IMR-90 (cell line): ENCODE measurements at regions of chr10 and their contacts with region 1.

Region 1: DNA sequence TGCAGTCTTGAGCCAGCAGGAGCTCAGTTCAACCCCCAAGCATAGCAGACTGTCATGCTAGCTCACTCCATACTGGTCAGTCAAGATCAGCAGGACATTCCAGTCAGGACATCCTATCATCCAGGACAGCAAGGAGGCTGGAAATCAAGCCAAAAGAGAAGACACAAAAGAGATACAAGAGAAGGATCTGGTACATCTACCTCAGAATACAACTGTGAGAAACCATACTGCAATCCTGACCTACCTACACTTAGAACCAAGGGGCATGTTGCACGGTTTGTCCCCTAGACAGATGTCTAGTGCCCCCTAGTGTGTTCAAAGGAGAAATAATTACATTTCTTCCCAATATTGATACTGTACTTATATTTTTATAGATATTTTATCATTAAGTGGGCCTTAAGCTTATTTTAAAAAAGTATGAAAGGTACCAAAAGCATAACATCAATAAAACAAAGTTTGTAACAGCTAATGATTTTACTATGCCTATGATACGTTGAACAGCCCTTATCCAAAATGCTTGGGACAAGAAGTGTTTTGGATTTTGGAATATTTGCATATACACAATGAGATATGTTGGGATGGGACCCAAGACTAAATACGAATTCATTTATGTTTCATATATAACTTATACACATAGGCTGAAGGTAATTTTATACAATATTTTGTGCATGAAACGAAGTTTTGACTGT is 26.7 kb downstream of the ERCC6 start:
- DNase-seq: peak; percentile 43
- ATAC-seq: peak; percentile 81
- H3K4me3 ChIP-seq: no peak overlapping the region
- H3K27ac ChIP-seq: no peak overlapping the region
- H3K4me1 ChIP-seq: peaks cover 2% of the 10 kb centered on the region; the same call in 1 of the 2 replicates
- H3K27me3 ChIP-seq: no peaks in the 10 kb centered on the region
- CTCF ChIP-seq: peak; percentile 70
- POLR2A ChIP-seq: no peak
- RAD21 ChIP-seq: peak; percentile 82

Region 2: GRCh38 chr10:48976196-48976595 is 536.1 kb before region 1 on chr10:
- CTCF ChIA-PET with region 1: interaction called, 4 read pairs
- POLR2A ChIA-PET with region 1: no interaction called
- dilution Hi-C with region 1: no loop called
- in situ Hi-C with region 1: loop called (anchors 5 kb)
- intact Hi-C with region 1: loop called (anchors 1 kb)
- DNase-seq: peak; percentile 4
- ATAC-seq: peak; percentile 53
- H3K4me3 ChIP-seq: no peak overlapping the region
- H3K27ac ChIP-seq: no peak overlapping the region
- H3K4me1 ChIP-seq: no peaks in the 10 kb centered on the region
- H3K27me3 ChIP-seq: peaks cover 20% of the 10 kb centered on the region
- CTCF ChIP-seq: 0 out of 2 replicates have a peak, but pooled peaks have one; percentile 17
- POLR2A ChIP-seq: no peak
- RAD21 ChIP-seq: peak; percentile 31

Region 3: GRCh38 chr10:49407552-49408137 is 104.6 kb before region 1 on chr10:
- CTCF ChIA-PET with region 1: interaction called, 30 read pairs
- POLR2A ChIA-PET with region 1: no interaction called
- dilution Hi-C with region 1: no loop called
- in situ Hi-C with region 1: loop called (anchors 5 kb)
- intact Hi-C with region 1: loop called (anchors 1 kb)
- DNase-seq: peak; percentile 68
- ATAC-seq: peak; percentile 97
- H3K4me3 ChIP-seq: no peak overlapping the region
- H3K27ac ChIP-seq: no peak overlapping the region
- H3K4me1 ChIP-seq: no peaks in the 10 kb centered on the region
- H3K27me3 ChIP-seq: peaks cover 51% of the 10 kb centered on the region
- CTCF ChIP-seq: peak; percentile 83
- POLR2A ChIP-seq: no peak
- RAD21 ChIP-seq: peak; percentile 74